CD4-positive, alpha-beta memory T cell (primary cell): ENCODE measurements at regions of chr11 and their contacts with region 1.

Region 1: GRCh38 chr11:61581030-61581928 is at the start of gene SYT7:
- DNase-seq: peak; percentile 88 to 99 (median 95)
- H3K4me3 ChIP-seq: peak within 1 kb of the TSS in 1 of 2 donors; percentile 50
- H3K4me3 Mint-ChIP-seq: peak within 1 kb of the TSS; percentile 78 to 94 (median 86)
- H3K27ac ChIP-seq: no peak within 1 kb of the TSS
- H3K27ac Mint-ChIP-seq: peak within 1 kb of the TSS; percentile 73 to 88 (median 84)
- H3K4me1 ChIP-seq: peaks cover 11% of the 10 kb centered on the region
- H3K4me1 Mint-ChIP-seq: peaks cover 6 to 25% (median 13%) of the 10 kb centered on the region in 4 donors
- H3K27me3 ChIP-seq: peaks cover 7% of the 10 kb centered on the region
- H3K27me3 Mint-ChIP-seq: peaks cover 17 to 36% of the 10 kb centered on the region in 2 donors
- total RNA-seq, gene SYT7: not detected

Region 2: GRCh38 chr11:60872961-60873524 is 708.2 kb before region 1 on chr11:
- CTCF ChIA-PET with region 1: no interaction called
- POLR2A ChIA-PET with region 1: no interaction called
- intact Hi-C with region 1: no loop called
- DNase-seq: peak in 1 of 5 donors; percentile 30
- H3K4me3 ChIP-seq: no peak overlapping the region
- H3K4me3 Mint-ChIP-seq: peak overlapping the region in 1 of 8 donors; percentile 29
- H3K27ac ChIP-seq: no peak overlapping the region
- H3K27ac Mint-ChIP-seq: peak overlapping the region in 4 of 7 donors; percentile 15 to 83 (median 57)
- H3K4me1 ChIP-seq: peaks cover 17% of the 10 kb centered on the region
- H3K4me1 Mint-ChIP-seq: peaks cover 3 to 22% (median 6%) of the 10 kb centered on the region in 4 donors
- H3K27me3 ChIP-seq: no peaks in the 10 kb centered on the region
- H3K27me3 Mint-ChIP-seq: peaks cover 3% of the 10 kb centered on the region in 2 donors

Region 3: DNA sequence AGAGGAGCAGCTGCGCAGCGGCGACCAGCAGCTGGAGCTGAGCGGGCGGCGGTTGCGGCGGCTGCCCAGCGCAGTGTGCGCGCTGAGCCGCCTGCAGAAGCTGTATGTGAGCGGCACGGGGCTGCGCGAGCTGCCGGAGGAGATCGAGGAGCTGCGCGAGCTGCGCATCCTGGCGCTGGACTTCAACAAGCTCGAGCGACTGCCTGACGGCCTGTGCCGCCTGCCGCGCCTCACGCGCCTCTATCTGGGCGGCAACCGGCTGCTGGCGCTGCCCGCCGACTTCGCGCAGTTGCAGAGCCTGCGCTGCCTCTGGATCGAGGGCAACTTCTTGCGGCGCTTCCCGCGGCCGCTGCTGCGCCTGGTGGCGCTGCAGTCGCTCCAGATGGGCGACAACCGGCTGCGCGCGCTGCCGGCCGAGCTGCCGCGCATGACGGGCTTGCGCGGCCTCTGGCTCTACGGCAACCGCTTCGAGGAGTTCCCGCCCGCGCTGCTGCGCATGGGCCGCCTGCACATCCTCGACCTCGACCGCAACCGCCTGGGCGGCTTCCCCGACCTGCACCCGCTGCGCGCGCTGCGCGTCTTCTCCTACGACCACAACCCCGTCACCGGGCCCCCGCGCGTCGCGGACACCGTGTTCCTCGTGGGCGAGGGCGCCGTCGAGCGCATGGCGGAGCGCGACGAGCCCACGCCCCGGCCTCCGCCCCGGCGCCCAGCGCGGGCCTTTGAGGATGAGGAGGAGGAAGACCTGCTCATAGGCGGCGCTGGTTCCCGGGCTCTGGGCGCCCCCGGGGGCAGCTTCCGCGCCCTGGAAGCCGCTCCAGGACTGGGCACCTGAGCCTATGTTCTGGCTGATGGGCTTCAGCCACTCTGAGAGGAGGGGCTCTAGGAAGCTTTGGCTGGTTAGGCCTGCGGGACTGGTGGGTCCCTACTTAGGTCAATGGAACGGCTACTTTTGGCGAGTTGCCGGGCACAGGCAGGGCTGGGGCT is 71.9 kb before region 1 on chr11:
- CTCF ChIA-PET with region 1: no interaction called
- POLR2A ChIA-PET with region 1: no interaction called
- intact Hi-C with region 1: no loop called
- DNase-seq: peak; percentile 45 to 68 (median 60)
- H3K4me3 ChIP-seq: peak overlapping the region; percentile 5 to 11
- H3K4me3 Mint-ChIP-seq: peak overlapping the region in 7 of 8 donors; percentile 17 to 64 (median 54)
- H3K27ac ChIP-seq: no peak overlapping the region
- H3K27ac Mint-ChIP-seq: no peak overlapping the region
- H3K4me1 ChIP-seq: peaks cover 17% of the 10 kb centered on the region
- H3K4me1 Mint-ChIP-seq: peaks cover 3 to 10% (median 6%) of the 10 kb centered on the region in 4 donors
- H3K27me3 ChIP-seq: peaks cover 16% of the 10 kb centered on the region
- H3K27me3 Mint-ChIP-seq: peaks cover 28 to 36% of the 10 kb centered on the region in 2 donors

Region 4: DNA sequence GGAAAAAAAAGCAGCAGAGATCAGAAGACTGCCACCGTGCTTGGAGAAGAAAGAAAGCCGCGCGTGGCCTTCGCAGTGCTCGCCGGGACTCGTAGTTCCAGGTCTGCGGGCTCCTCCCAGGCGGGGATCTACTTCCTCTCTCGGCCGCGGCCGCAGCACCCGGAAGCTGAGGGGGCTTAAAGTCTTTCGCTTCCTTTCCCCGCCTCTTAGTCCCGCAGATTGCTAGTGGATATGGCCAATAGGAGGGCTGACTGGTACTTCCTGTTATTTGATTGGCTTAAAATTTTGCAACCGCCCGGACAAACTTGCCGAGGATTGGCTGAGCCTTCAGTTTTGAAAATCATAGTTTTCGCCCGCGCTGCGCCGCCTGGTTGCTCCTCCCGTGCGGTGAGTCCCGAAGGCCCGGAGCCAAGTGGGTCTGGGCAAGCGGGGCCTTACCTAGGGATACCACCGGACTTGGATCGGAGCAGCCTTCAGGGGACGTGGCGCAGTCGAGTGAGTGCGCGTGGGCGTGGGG is 542.4 kb after region 1 on chr11 and contains the start of gene INCENP:
- CTCF ChIA-PET with region 1: no interaction called
- POLR2A ChIA-PET with region 1: no interaction called
- intact Hi-C with region 1: loop called (anchors 5 kb)
- DNase-seq: peak; percentile 92 to 98 (median 96)
- H3K4me3 ChIP-seq: peak within 1 kb of the TSS; percentile 88 to 96
- H3K4me3 Mint-ChIP-seq: peak within 1 kb of the TSS; percentile 93 to 98 (median 95)
- H3K27ac ChIP-seq: peak within 1 kb of the TSS; percentile 82
- H3K27ac Mint-ChIP-seq: peak within 1 kb of the TSS; percentile 86 to 95 (median 92)
- H3K4me1 ChIP-seq: peaks cover 23% of the 10 kb centered on the region
- H3K4me1 Mint-ChIP-seq: peaks cover 15 to 42% (median 27%) of the 10 kb centered on the region in 4 donors
- H3K27me3 ChIP-seq: no peaks in the 10 kb centered on the region
- H3K27me3 Mint-ChIP-seq: peaks cover 0 to 2% of the 10 kb centered on the region in 2 donors
- total RNA-seq, gene INCENP: 28.4 to 32.1 TPM